AG04450 (cell line): ENCODE measurements at regions of chr9 and their contacts with region 1.

Region 1: DNA sequence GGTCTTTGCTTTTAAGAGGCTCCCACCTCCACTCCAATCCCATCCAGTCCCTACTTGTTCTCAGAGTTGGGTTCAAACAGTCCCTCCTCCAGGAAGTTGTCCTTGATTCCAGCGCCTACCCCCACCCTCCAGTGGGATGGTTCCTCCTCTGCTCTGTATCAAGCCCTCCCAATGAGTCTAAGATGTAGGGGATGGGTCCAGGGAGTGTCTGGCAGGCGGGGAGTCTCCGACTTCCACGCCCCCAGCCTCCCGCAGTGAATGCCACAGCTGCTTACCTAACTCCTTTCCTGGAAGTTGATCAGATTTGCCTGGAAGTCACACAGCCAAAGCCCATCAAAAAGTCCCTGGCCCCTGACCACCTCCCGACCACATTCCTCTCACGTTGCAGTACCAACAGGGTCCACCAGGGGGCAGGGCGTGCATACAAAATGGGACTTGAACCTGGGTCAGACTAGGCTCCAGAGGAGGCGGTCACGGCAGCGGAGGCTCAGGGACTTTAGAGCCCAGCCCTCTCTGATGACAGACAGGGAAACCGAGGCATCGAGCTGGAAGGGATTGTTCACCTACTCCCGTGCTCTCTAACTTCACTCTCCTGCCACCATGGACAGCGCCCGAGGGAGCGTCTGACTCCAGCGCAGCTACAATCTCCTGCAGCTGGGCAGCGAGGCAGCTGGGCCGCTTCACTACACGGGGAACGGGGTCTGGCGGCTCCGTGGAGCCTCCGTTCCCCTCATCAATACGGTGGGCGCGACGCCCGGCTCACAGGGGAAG is 25.0 kb upstream of the TDRD7 start:
- DNase-seq: peak; percentile 24
- H3K4me3 ChIP-seq: no peak overlapping the region
- H3K27ac ChIP-seq: no peak overlapping the region
- H3K27me3 ChIP-seq: peaks cover 3% of the 10 kb centered on the region
- CTCF ChIP-seq: peak; percentile 99

Region 2: DNA sequence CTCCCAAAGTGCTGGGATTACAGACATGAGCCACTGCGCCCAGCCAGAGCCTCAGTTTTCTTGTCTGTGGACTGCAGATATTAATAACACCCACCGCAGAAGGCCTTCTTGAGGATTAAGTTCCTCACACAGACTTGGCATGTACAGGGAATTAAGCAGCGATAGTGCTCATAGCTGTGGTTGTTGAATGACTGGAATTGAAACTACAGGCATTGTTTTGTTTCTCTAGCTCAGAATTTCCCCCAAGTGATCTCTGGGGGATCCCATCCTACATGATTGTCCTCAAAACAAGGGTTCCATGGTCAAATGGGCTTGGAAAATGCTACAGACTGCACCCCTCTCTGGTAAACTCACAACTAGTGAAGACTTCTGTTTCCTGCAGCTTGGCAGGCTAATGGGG is 19.2 kb before region 1 on chr9:
- CTCF ChIA-PET with region 1: interaction called, 13 read pairs
- POLR2A ChIA-PET with region 1: no interaction called
- DNase-seq: no peak
- H3K4me3 ChIP-seq: no peak overlapping the region
- H3K27ac ChIP-seq: no peak overlapping the region
- H3K27me3 ChIP-seq: no peaks in the 10 kb centered on the region
- CTCF ChIP-seq: no peak